ENCODE measurements at regions of chr18 and their contacts with region 1.

Region 1: DNA sequence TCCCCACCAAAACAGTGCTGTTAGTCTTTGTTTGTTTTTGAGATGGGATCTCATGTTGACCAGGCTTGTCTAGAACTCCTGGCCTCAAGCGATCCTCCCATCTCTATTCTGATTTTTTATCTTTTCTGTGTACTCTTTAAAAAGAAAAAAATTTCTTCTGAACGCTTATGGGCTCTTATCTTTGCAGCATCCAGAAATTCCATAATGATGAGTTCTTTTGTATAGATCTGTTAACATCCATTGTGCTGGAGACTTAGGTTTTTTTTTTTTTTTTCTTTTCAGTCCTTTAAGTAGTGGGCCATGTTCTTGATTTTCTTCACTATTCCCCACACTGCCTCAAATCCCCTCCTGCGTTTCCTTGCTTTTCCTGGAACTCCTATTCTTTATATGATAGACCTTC is 31.0 kb downstream of the RBBP8 start:
- DNase-seq: no peak
- ATAC-seq: no peak
- H3K4me3 Mint-ChIP-seq: no peak overlapping the region
- H3K27ac Mint-ChIP-seq: no peak overlapping the region
- H3K4me1 Mint-ChIP-seq: no peaks in the 10 kb centered on the region
- H3K27me3 Mint-ChIP-seq: no peaks in the 10 kb centered on the region
- CTCF ChIP-seq: no peak

Region 2: GRCh38 chr18:22912149-22912548 is 52.0 kb before region 1 on chr18:
- CTCF ChIA-PET with region 1: no interaction called
- POLR2A ChIA-PET with region 1: no interaction called
- intact Hi-C with region 1: no loop called
- DNase-seq: no peak
- ATAC-seq: no peak
- H3K4me3 Mint-ChIP-seq: no peak overlapping the region
- H3K27ac Mint-ChIP-seq: no peak overlapping the region
- H3K4me1 Mint-ChIP-seq: no peaks in the 10 kb centered on the region
- H3K27me3 Mint-ChIP-seq: no peaks in the 10 kb centered on the region
- CTCF ChIP-seq: no peak

Region 3: GRCh38 chr18:23719634-23720201 is 755.6 kb after region 1 on chr18:
- CTCF ChIA-PET with region 1: no interaction called
- POLR2A ChIA-PET with region 1: interaction called, 10 read pairs
- intact Hi-C with region 1: no loop called
- DNase-seq: no peak
- ATAC-seq: no peak
- H3K4me3 Mint-ChIP-seq: no peak overlapping the region
- H3K27ac Mint-ChIP-seq: no peak overlapping the region
- H3K4me1 Mint-ChIP-seq: no peaks in the 10 kb centered on the region
- H3K27me3 Mint-ChIP-seq: peaks cover 9% of the 10 kb centered on the region
- CTCF ChIP-seq: no peak

Measured in activated B cell treated with CpG ODN at 0.5 μM for 24 hours (primary cell).